Mucosa of descending colon (tissue), 3 donors: ENCODE measurements at regions of chr2 and their contacts with region 1.

Region 1: GRCh38 chr2:37005118-37005868 is 39.0 kb upstream of the STRN start:
- DNase-seq: peak in 1 of 3 donors; percentile 62
- ATAC-seq: peak; percentile 78
- H3K4me3 ChIP-seq: no peak overlapping the region
- H3K4me1 ChIP-seq: peaks cover 11% of the 10 kb centered on the region
- CTCF ChIP-seq: peak; percentile 27

Region 2: GRCh38 chr2:36785179-36785795 is 220.0 kb before region 1 on chr2:
- intact Hi-C with region 1: loop called in 1 of 2 experiments (anchors 2 kb)
- DNase-seq: peak in 2 of 3 donors; percentile 79
- ATAC-seq: peak; percentile 93
- H3K4me3 ChIP-seq: no peak overlapping the region
- H3K4me1 ChIP-seq: peaks cover 4% of the 10 kb centered on the region
- CTCF ChIP-seq: peak; percentile 96

Region 3: DNA sequence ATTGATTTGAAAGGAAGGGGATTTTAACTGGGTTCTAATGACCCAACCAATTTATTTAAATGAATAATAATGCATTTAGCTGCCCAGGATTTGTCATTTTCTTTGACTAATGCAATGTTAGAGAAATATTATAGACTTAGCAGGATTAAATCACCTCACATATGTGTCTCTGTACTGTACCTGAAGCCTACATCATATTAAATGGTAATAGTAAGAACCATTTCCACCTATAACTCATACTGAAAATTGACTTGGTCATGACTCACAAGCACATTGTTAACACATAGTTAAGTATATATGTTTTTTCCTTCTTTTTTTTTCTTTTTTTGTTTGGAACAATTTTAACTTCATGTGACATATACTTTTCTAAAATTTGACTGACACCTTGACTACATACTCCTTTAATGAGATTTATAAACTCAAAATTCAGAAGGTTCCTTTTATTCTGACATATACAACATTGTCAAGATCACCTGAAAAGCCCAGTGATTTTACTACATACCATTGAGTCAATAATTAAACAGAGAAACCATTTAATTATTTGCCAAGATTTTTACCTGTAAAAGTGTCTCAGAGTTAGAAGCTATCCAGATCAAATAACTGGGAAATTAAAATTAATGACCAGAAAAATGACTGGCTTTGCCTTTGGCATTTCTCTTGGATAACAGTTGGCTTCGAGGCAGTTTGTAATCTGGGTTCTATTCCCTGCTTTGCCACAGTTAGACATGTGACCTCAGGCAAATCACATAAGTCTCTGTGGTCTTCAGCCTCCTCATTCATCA is 724.9 kb after region 1 on chr2:
- intact Hi-C with region 1: no loop called
- DNase-seq: no peak
- ATAC-seq: no peak
- H3K4me3 ChIP-seq: no peak overlapping the region
- H3K4me1 ChIP-seq: no peaks in the 10 kb centered on the region
- CTCF ChIP-seq: no peak